ENCODE measurements at regions of chr6 and their contacts with region 1.

Region 1: GRCh38 chr6:114862064-114862463 is 519.2 kb upstream of the HS3ST5 start:
- DNase-seq: no peak
- CTCF ChIP-seq: no peak

Region 2: GRCh38 chr6:114844359-114844758 is 17.7 kb before region 1 on chr6:
- CTCF ChIA-PET with region 1: no interaction called
- POLR2A ChIA-PET with region 1: no interaction called
- DNase-seq: no peak
- CTCF ChIP-seq: no peak

Region 3: GRCh38 chr6:114878091-114878490 is 16.0 kb after region 1 on chr6:
- CTCF ChIA-PET with region 1: interaction called, 10 read pairs
- POLR2A ChIA-PET with region 1: no interaction called
- DNase-seq: no peak
- CTCF ChIP-seq: no peak

Measured in GM10248 (cell line).